Activated B cell treated with CpG ODN at 0.5 μM for 24 hours (primary cell): ENCODE measurements at regions of chr12 and their contacts with region 1.

Region 1: GRCh38 chr12:11055306-11055705 is 6.8 kb downstream of the TAS2R46 start:
- DNase-seq: no peak
- ATAC-seq: no peak
- H3K4me3 Mint-ChIP-seq: no peak overlapping the region
- H3K27ac Mint-ChIP-seq: no peak overlapping the region
- H3K4me1 Mint-ChIP-seq: no peaks in the 10 kb centered on the region
- H3K27me3 Mint-ChIP-seq: no peaks in the 10 kb centered on the region
- CTCF ChIP-seq: no peak

Region 2: DNA sequence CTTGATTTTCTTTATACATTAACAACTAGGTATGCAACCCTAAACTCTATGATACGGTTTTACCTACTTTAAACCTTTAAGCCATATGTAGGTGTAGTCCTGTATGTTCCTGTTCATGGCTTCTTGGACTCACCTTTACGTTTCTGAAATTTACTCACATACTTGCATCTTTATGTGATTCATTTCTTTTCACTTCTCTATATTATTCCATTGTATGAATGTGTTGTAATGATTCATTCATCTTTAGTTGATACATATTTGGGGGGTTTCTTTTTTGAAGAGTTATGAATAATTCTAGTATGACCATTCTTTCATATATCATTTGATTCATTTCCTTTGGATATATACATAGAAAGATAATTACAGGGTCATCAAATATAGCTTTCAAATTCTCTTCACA is 66.2 kb before region 1 on chr12:
- CTCF ChIA-PET with region 1: no interaction called
- POLR2A ChIA-PET with region 1: no interaction called
- intact Hi-C with region 1: no loop called
- DNase-seq: no peak
- ATAC-seq: no peak
- H3K4me3 Mint-ChIP-seq: no peak overlapping the region
- H3K27ac Mint-ChIP-seq: no peak overlapping the region
- H3K4me1 Mint-ChIP-seq: no peaks in the 10 kb centered on the region
- H3K27me3 Mint-ChIP-seq: no peaks in the 10 kb centered on the region
- CTCF ChIP-seq: no peak

Region 3: DNA sequence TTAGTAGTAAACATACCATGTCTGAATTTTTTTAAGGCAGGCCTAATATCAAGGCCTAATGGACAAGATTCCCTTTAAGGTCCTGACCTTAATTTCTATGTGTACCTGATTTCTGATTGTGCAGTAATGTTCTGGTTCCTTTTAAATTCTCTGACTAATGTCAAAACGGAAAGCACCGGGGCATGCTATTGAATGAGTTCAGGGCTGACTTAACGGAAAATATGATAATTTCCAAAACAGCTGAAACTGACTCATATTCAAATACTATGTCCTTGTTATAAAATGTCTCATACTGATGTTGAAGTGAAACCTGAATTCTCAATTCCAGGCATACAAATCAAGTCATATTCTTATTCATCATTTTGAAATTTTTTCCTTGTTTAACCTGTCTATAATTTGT is 30.1 kb after region 1 on chr12:
- CTCF ChIA-PET with region 1: no interaction called
- POLR2A ChIA-PET with region 1: no interaction called
- intact Hi-C with region 1: loop called (anchors 1 kb)
- DNase-seq: no peak
- ATAC-seq: peak; percentile 85
- H3K4me3 Mint-ChIP-seq: no peak overlapping the region
- H3K27ac Mint-ChIP-seq: peak overlapping the region; percentile 68
- H3K4me1 Mint-ChIP-seq: peaks cover 9% of the 10 kb centered on the region
- H3K27me3 Mint-ChIP-seq: no peaks in the 10 kb centered on the region
- CTCF ChIP-seq: no peak

Region 4: DNA sequence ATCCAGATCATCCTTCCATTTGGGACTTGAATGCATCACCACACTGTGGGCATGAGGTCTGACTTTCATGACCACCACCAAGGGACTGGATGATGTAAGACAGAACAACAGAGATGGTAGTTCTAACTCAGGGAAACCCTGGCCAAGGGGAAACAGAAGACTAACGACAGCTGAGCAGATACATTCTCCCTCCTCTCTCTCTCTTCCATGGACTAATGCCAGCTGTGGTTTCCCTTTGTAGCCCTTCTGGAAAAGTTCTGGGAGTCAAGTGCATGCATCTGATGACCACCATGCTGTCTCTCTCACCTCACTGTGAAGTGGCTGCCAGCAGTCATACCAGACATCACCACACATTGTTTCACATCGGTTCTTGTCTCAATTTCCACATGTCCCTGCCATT is 75.7 kb after region 1 on chr12:
- CTCF ChIA-PET with region 1: no interaction called
- POLR2A ChIA-PET with region 1: no interaction called
- intact Hi-C with region 1: loop called (anchors 2 kb)
- DNase-seq: no peak
- ATAC-seq: no peak
- H3K4me3 Mint-ChIP-seq: no peak overlapping the region
- H3K27ac Mint-ChIP-seq: no peak overlapping the region
- H3K4me1 Mint-ChIP-seq: peaks cover 7% of the 10 kb centered on the region
- H3K27me3 Mint-ChIP-seq: no peaks in the 10 kb centered on the region
- CTCF ChIP-seq: no peak